Keratinocyte (primary cell): ENCODE measurements at regions of chr3 and their contacts with region 1.

Region 1: DNA sequence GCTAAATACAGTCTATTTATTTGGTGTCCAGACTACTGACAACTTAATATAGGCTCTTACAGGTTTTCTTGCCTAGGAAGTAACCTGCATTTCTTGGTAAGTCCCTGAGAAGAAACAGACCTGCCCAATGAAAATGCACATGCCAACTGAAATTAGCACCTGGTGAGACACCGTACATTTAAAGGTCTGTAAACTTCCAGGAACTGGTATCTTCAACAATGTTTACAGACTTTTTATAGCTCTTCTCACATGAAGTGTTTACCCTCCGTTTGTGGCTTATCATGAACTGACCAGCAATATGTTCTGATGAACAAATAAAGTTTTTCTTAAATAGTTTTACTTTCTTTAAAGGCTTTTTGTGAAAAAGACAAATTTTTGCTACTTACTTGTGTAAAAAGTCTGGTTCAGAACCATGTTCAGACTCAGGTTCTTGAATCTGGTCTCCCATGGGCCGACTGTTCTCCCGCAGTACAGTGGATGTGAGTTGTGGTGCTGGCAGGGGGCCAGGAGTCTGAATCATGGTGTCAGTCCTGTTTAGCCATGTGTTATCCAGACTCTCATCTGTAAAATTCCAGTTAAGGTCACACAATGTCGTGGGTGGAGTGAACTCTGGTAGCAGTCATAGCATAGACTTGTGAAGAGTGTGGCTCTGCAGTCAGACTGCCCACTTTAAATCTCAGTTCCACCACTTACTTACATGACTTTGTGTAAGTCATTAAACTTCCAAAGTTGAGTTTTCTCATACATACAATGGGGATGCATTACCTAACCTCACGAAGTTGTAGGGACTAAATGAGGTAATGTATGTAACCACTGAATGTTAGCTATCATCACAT is 93.5 kb downstream of the PCCB start:
- DNase-seq: peak; percentile 33
- H3K4me3 ChIP-seq: no peak overlapping the region
- H3K27ac ChIP-seq: no peak overlapping the region
- H3K4me1 ChIP-seq: peaks cover 11% of the 10 kb centered on the region
- H3K27me3 ChIP-seq: no peaks in the 10 kb centered on the region
- CTCF ChIP-seq: no peak

Region 2: DNA sequence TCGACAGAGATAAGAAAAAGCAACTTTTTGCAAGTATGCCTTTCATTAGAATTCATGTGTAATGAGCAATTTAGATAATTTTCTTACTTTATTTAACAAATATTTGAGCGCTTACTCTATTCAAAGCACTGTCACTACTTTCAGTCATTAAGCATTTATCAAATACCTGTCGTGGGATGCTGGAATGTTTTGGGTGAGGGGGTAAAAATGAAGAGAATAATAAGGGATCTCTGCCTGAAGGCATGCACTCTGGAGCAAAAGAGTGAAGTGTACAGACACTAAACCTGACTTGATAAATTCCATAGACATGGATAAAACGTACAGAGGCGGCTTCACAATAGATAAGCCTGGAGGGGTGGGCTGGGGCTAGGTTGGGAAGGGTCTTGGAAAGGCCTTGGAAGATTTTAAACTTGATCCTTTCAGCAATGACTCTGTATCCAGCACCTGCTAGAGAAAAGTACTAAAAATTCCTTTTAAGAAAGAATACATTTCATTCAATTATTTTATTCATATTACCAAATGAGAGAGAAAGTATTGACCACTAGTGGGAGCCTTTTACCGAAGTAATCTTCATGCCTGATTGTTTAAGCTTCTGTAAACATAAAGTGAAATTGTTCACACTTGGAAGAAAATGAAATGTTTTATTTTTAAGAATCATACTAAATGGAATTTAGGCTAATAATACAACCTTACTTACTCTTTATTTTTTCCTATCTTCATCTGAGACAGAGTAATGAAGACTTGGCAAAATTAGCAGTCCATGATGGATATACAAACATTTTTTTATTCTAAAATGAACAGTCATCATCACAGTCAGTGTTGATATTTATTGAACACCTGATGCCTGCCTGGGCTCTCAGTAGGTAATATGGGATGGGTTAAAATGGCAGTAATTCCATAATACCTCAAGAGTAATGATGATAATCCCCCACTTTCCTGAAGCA is 265.0 kb before region 1 on chr3:
- dilution Hi-C with region 1: no loop called
- DNase-seq: no peak
- H3K4me3 ChIP-seq: no peak overlapping the region
- H3K27ac ChIP-seq: no peak overlapping the region
- H3K4me1 ChIP-seq: no peaks in the 10 kb centered on the region
- H3K27me3 ChIP-seq: no peaks in the 10 kb centered on the region
- CTCF ChIP-seq: peak in 2 of 3 experiments; percentile 37 to 62

Region 3: DNA sequence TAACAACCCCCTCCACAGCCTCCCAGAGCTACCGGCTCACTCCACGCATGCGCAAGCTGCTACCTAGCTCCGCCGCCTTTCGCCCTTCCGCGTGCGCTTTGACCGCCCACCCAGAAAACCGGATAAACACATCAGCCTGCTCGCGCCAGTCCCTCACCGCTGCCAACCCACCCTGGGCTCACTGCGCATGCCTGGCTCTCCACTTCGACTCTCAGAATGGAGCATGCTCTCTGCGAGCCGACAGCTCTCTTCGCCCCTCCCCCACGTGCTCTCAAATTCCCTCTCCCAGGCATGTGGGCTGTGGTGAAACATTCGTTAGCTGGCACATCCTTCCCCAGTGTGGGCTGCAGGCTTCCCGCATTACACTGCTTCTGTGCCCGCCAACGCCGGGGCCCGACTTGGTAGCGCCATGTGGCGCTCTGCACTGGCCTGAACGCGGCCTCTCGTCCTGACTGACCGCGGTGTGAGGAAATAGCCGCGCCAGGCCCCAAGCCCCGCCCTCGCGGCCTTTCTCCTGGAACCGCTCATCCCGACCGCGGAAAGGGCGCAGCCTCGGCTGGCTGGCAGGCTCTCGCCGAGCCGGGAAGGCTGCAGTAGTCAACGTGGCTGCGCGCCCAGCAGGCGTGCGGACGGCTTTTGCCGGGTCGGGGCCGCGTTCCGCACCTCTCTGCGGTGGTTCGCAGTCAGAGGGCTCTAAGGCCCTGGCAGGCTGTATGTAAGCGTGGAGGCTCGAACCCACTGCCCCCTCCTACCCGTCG is 147.1 kb before region 1 on chr3:
- dilution Hi-C with region 1: loop called (anchors 25 kb)
- DNase-seq: peak; percentile 97
- H3K4me3 ChIP-seq: peak overlapping the region; percentile 79 to 95 (median 93)
- H3K27ac ChIP-seq: peak overlapping the region; percentile 93
- H3K4me1 ChIP-seq: peaks cover 16% of the 10 kb centered on the region
- H3K27me3 ChIP-seq: no peaks in the 10 kb centered on the region
- CTCF ChIP-seq: no peak